T-cell (primary cell): ENCODE measurements at regions of chr5 and their contacts with region 1.

Region 1: GRCh38 chr5:159427180-159428012 is 97.1 kb upstream of the IL12B start:
- DNase-seq: peak in 2 of 35 experiments; percentile 3 to 38
- ATAC-seq: peak in 3 of 4 experiments; percentile 41 to 80 (median 61)
- H3K4me3 ChIP-seq: no peak overlapping the region
- H3K4me3 Mint-ChIP-seq: no peak overlapping the region
- H3K27ac ChIP-seq: peak overlapping the region; percentile 63
- H3K27ac Mint-ChIP-seq: peak overlapping the region; percentile 73 to 81
- H3K4me1 ChIP-seq: peaks cover 8 to 36% of the 10 kb centered on the region in 2 experiments
- H3K4me1 Mint-ChIP-seq: peaks cover 23 to 31% (median 23%) of the 10 kb centered on the region in 3 donors
- H3K27me3 ChIP-seq: peaks cover 0 to 5% of the 10 kb centered on the region in 2 experiments
- H3K27me3 Mint-ChIP-seq: no peaks in the 10 kb centered on the region

Region 2: DNA sequence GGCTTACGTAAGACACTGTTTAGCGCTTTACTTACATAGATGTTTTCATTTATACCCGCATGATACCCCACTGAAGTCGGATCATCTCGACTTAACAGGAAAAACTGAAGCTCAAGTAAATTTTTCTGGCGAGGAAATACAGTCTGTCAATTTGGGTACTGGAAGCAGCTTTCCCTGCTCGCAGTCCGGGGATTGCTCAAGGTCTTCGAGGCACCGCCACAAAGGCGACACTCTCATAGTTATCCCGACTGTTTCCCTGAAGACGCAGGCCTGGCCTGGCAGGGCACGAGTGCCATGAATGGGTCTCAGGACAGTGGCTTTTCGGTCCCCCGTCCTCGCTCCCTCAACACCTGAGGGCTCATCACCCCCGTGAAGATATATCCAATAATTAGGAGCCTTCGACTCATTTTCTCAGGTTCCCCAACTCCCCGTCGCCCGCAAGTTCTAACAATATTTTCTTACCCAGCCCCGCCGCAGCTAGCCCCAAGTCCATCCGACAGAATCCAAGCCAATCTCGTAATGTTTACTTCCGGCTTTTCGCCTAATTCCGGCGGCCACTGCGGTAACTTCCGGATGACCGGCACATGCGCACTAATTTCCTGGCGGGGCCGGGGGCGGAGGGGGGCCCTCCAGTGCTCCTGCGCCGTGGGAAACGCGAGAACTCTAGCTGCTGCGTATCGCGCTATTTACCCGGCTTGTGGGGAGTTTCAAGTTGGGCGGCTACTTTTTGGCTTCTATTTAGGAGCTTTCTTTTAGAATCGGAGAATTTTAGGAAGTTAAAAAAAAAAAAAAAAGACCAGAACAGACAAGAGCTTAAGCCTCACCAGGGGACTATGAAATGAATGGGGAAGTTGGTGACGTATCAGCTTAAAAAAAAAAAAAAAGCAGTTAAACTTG is 991.4 kb after region 1 on chr5 and contains the start of gene SLU7:
- CTCF ChIA-PET with region 1: interaction called in 1 of 2 experiments, 10 read pairs
- POLR2A ChIA-PET with region 1: no interaction called
- DNase-seq: peak; percentile 84 to 96 (median 91)
- ATAC-seq: peak; percentile 81 to 84 (median 82)
- H3K4me3 ChIP-seq: peak within 1 kb of the TSS; percentile 86 to 96
- H3K4me3 Mint-ChIP-seq: peak within 1 kb of the TSS; percentile 95 to 99 (median 95)
- H3K27ac ChIP-seq: peak within 1 kb of the TSS; percentile 87
- H3K27ac Mint-ChIP-seq: peak within 1 kb of the TSS; percentile 95 to 99
- H3K4me1 ChIP-seq: peaks cover 32% of the 10 kb centered on the region in 2 experiments
- H3K4me1 Mint-ChIP-seq: peaks cover 73 to 82% (median 78%) of the 10 kb centered on the region in 3 donors
- H3K27me3 ChIP-seq: no peaks in the 10 kb centered on the region
- H3K27me3 Mint-ChIP-seq: no peaks in the 10 kb centered on the region
- total RNA-seq, gene SLU7: 64.9 to 76.8 (median 75.2) TPM